Colonic mucosa (tissue), 4 donors: ENCODE measurements at regions of chr22 and their contacts with region 1.

Region 1: GRCh38 chr22:31676700-31677099 is 14.7 kb upstream of the PISD start:
- DNase-seq: peak; percentile 98
- H3K4me3 ChIP-seq: peak overlapping the region; percentile 30
- H3K27ac ChIP-seq: peak overlapping the region; percentile 58
- H3K4me1 ChIP-seq: no peaks in the 10 kb centered on the region
- H3K27me3 ChIP-seq: no peaks in the 10 kb centered on the region
- CTCF ChIP-seq: no peak

Region 2: GRCh38 chr22:31585161-31585859 is 91.4 kb before region 1 on chr22:
- intact Hi-C with region 1: no loop called
- DNase-seq: no peak
- H3K4me3 ChIP-seq: no peak overlapping the region
- H3K27ac ChIP-seq: no peak overlapping the region
- H3K4me1 ChIP-seq: no peaks in the 10 kb centered on the region
- H3K27me3 ChIP-seq: no peaks in the 10 kb centered on the region
- CTCF ChIP-seq: no peak

Region 3: GRCh38 chr22:31739795-31740201 is 63.1 kb after region 1 on chr22:
- intact Hi-C with region 1: loop called (anchors 5 kb)
- DNase-seq: no peak
- H3K4me3 ChIP-seq: no peak overlapping the region
- H3K27ac ChIP-seq: no peak overlapping the region
- H3K4me1 ChIP-seq: no peaks in the 10 kb centered on the region
- H3K27me3 ChIP-seq: no peaks in the 10 kb centered on the region
- CTCF ChIP-seq: no peak

Region 4: DNA sequence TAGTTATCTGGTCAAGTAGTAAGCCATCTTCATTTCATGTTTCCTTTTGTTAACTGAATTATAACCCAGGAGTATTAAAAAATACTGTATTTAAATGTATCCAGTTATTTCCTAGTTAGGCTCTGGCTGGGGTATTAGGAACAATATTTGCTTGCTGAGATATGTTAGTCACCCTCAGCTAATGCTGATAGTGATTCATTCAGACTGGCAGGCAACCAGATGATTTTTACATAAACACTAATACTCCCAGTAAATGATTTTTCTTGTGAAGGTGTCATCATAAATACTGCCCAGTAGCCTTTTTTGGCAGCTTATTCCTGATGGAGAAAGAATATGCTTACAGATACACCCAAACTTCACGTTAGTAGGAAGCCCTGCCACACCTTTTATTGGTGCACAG is 275.8 kb after region 1 on chr22:
- intact Hi-C with region 1: loop called (anchors 10 kb)
- DNase-seq: no peak
- H3K4me3 ChIP-seq: no peak overlapping the region
- H3K27ac ChIP-seq: peak overlapping the region; percentile 34
- H3K4me1 ChIP-seq: peaks cover 16% of the 10 kb centered on the region
- H3K27me3 ChIP-seq: no peaks in the 10 kb centered on the region
- CTCF ChIP-seq: no peak